Pancreas (tissue), 10 donors: ENCODE measurements at regions of chr4 and their contacts with region 1.

Region 1: GRCh38 chr4:37609626-37610025 is 76.5 kb downstream of the RELL1 start:
- DNase-seq: no peak
- ATAC-seq: no peak
- H3K4me3 ChIP-seq: no peak overlapping the region
- H3K27ac ChIP-seq: no peak overlapping the region
- H3K4me1 ChIP-seq: no peaks in the 10 kb centered on the region
- H3K27me3 ChIP-seq: no peaks in the 10 kb centered on the region
- CTCF ChIP-seq: no peak

Region 2: GRCh38 chr4:37244583-37245390 is 364.8 kb before region 1 on chr4 and contains the start of gene NWD2:
- intact Hi-C with region 1: no loop called
- DNase-seq: peak in 3 of 6 donors; percentile 18 to 72 (median 58)
- ATAC-seq: peak in 3 of 4 donors; percentile 53 to 61 (median 59)
- H3K4me3 ChIP-seq: peak within 1 kb of the TSS in 2 of 4 donors; percentile 27 to 37
- H3K27ac ChIP-seq: no peak within 1 kb of the TSS
- H3K4me1 ChIP-seq: no peaks in the 10 kb centered on the region
- H3K27me3 ChIP-seq: peaks cover 0 to 12% (median 1%) of the 10 kb centered on the region in 4 donors
- CTCF ChIP-seq: no peak
- total RNA-seq, gene NWD2: under 0.01 to 0.22 (median 0.09) TPM in 5 of 6 donors, not detected in the other

Region 3: DNA sequence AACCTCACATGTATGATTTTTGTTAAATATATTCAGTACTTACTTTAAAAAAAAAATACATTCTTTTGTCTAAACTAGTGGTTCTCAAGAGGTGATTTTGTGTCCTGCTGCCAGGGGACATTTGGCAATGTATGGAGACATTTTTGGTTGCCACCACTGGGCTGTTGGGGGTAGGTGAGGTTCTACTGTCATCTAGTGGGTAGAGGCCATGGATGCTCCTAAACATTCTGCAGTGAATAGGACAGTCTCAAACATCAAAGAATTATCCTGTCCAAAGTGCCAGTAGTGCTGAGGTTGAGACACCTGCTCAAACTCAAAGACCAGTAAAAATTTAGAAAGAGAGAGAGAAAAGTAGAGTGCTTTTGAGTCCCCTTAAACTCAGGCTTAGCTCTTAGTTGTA is 183.9 kb after region 1 on chr4:
- intact Hi-C with region 1: loop called (anchors 5 to 10 kb)
- DNase-seq: peak in 1 of 6 donors; percentile 27
- ATAC-seq: peak in 3 of 4 donors; percentile 74 to 76 (median 76)
- H3K4me3 ChIP-seq: no peak overlapping the region
- H3K27ac ChIP-seq: no peak overlapping the region
- H3K4me1 ChIP-seq: no peaks in the 10 kb centered on the region
- H3K27me3 ChIP-seq: no peaks in the 10 kb centered on the region
- CTCF ChIP-seq: peak in 1 of 4 donors; percentile 17

Region 4: GRCh38 chr4:37917388-37917787 is 307.8 kb after region 1 on chr4:
- intact Hi-C with region 1: no loop called
- DNase-seq: no peak
- ATAC-seq: no peak
- H3K4me3 ChIP-seq: no peak overlapping the region
- H3K27ac ChIP-seq: no peak overlapping the region
- H3K4me1 ChIP-seq: no peaks in the 10 kb centered on the region
- H3K27me3 ChIP-seq: no peaks in the 10 kb centered on the region
- CTCF ChIP-seq: no peak